Activated CD4-positive, alpha-beta memory T cell treated with anti-CD3 and anti-CD28 coated beads, Interleukin-2, amount 10 ng/mL, durations not matched to agents 7 days and 5 days (primary cell): ENCODE measurements at regions of chr6 and their contacts with region 1.

Region 1: GRCh38 chr6:30206799-30207618 is 6.2 kb downstream of the TRIM26 start:
- DNase-seq: no peak
- H3K4me3 Mint-ChIP-seq: no peak overlapping the region
- H3K27ac Mint-ChIP-seq: no peak overlapping the region
- H3K4me1 Mint-ChIP-seq: peaks cover 80% of the 10 kb centered on the region
- H3K27me3 Mint-ChIP-seq: no peaks in the 10 kb centered on the region

Region 2: GRCh38 chr6:30219244-30219643 is 12.2 kb after region 1 on chr6:
- CTCF ChIA-PET with region 1: interaction called, 20 read pairs
- POLR2A ChIA-PET with region 1: interaction called, 17 read pairs
- DNase-seq: peak; percentile 53
- H3K4me3 Mint-ChIP-seq: no peak overlapping the region
- H3K27ac Mint-ChIP-seq: no peak overlapping the region
- H3K4me1 Mint-ChIP-seq: peaks cover 16% of the 10 kb centered on the region
- H3K27me3 Mint-ChIP-seq: no peaks in the 10 kb centered on the region

Region 3: DNA sequence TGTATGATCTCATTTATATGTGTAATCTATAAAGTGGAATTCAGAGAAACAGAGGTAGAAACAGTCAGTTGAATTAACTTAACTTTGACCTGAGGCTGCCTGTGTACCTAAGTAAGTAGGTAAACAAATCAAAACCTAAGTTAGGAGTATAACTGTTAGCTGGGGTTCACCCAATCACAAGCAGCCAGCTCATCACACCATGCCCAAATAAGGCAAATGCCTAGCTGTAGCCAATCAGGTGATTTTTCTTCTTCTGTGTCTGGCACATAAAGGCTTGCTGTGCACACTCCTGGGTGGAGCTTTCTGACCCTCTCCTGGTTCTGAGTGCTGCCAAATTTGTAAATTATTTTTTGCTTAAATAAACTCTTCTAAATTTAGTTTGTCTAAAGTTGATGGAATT is 65.0 kb after region 1 on chr6:
- CTCF ChIA-PET with region 1: no interaction called
- POLR2A ChIA-PET with region 1: no interaction called
- DNase-seq: no peak
- H3K4me3 Mint-ChIP-seq: no peak overlapping the region
- H3K27ac Mint-ChIP-seq: no peak overlapping the region
- H3K4me1 Mint-ChIP-seq: no peaks in the 10 kb centered on the region
- H3K27me3 Mint-ChIP-seq: peaks cover 28% of the 10 kb centered on the region

Region 4: DNA sequence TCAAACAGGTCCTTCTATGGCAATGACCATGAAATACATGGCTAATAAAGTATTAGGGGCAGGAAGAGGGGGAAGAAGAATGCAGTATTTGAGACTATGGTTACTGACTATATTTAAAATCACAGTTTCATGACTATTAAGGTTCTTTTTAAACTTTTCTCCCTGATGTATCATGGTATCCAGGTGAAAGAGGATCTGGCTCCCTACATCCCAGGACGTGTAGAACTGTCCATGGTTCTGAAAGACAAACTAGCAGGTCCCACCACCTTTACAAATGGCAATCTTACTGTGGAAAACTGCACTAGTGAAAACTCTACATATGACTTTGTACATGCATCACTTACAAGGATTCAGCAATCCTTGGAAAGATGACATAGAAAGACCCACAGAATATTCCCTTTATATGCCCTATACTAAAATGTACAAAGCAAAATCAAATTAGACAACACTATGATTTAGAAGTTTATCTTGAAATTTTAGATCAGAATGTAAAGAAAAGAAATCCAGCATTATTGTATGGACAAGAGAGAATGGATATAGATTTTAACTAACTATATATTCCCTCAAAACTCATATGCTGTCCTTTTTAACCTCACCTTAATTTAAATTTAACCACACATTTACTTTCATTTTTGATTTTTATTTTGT is 171.4 kb after region 1 on chr6:
- CTCF ChIA-PET with region 1: no interaction called
- POLR2A ChIA-PET with region 1: no interaction called
- DNase-seq: no peak
- H3K4me3 Mint-ChIP-seq: no peak overlapping the region
- H3K27ac Mint-ChIP-seq: no peak overlapping the region
- H3K4me1 Mint-ChIP-seq: no peaks in the 10 kb centered on the region
- H3K27me3 Mint-ChIP-seq: peaks cover 65% of the 10 kb centered on the region